ENCODE measurements at regions of chr16 and their contacts with region 1.

Region 1: GRCh38 chr16:4288148-4288921 is 15.5 kb upstream of the TFAP4 start:
- DNase-seq: peak; percentile 78
- ATAC-seq: peak; percentile 95
- H3K4me3 Mint-ChIP-seq: no peak overlapping the region
- H3K27ac Mint-ChIP-seq: no peak overlapping the region
- H3K4me1 Mint-ChIP-seq: peaks cover 9% of the 10 kb centered on the region
- H3K27me3 Mint-ChIP-seq: peaks cover 15% of the 10 kb centered on the region
- CTCF ChIP-seq: peak; percentile 79

Region 2: GRCh38 chr16:4220358-4220757 is 68.0 kb before region 1 on chr16:
- CTCF ChIA-PET with region 1: no interaction called
- POLR2A ChIA-PET with region 1: no interaction called
- intact Hi-C with region 1: no loop called
- DNase-seq: no peak
- ATAC-seq: no peak
- H3K4me3 Mint-ChIP-seq: no peak overlapping the region
- H3K27ac Mint-ChIP-seq: no peak overlapping the region
- H3K4me1 Mint-ChIP-seq: no peaks in the 10 kb centered on the region
- H3K27me3 Mint-ChIP-seq: peaks cover 10% of the 10 kb centered on the region
- CTCF ChIP-seq: no peak

Region 3: DNA sequence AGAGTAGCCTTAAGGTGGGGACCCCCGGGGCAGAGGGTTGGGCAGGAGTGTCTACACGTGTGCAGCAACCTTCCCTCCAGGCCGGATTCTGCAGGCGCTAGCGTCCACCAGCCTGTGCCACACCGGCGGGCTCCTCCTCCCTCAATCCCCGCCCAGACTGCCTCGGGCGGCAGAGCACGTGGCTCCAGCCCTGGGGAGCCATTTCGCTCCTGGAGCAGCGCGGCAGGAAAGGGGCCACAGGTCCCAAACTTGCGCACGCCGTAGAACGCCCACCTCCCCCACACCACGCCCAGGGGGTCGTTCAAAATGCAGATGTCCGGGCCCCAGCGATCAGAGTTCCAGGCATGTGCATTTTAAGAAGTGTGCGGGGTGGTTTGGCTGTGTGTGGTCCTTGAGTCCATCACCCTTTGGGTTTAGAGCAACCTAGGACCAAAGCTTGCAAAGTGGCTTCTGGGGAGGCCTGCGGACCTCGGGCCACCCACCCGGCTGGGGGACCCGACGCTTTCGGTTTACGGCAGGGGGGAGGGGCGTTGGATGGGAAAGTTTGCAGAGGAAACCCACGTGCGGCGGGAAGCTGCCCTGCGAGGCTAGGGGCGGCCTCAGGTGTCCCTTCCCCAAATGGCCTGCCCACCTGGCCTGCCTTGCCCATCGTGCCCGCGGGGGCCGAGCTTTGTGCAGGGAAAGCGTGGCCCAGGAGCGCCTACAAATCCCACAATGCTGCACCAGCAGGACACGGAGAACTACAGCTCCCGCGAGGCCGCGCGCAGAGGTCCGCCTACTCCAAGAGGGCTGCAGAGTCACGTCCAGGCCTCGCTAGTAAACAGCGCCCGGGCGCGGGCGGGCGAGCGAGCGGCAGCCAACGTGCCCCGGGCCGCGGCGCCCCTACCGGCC is 16.9 kb before region 1 on chr16:
- CTCF ChIA-PET with region 1: no interaction called
- POLR2A ChIA-PET with region 1: interaction called, 5 read pairs
- intact Hi-C with region 1: loop called (anchors 2 kb)
- DNase-seq: peak; percentile 82
- ATAC-seq: peak; percentile 81
- H3K4me3 Mint-ChIP-seq: peak overlapping the region; percentile 86
- H3K27ac Mint-ChIP-seq: peak overlapping the region; percentile 88
- H3K4me1 Mint-ChIP-seq: peaks cover 11% of the 10 kb centered on the region
- H3K27me3 Mint-ChIP-seq: no peaks in the 10 kb centered on the region
- CTCF ChIP-seq: no peak

Region 4: DNA sequence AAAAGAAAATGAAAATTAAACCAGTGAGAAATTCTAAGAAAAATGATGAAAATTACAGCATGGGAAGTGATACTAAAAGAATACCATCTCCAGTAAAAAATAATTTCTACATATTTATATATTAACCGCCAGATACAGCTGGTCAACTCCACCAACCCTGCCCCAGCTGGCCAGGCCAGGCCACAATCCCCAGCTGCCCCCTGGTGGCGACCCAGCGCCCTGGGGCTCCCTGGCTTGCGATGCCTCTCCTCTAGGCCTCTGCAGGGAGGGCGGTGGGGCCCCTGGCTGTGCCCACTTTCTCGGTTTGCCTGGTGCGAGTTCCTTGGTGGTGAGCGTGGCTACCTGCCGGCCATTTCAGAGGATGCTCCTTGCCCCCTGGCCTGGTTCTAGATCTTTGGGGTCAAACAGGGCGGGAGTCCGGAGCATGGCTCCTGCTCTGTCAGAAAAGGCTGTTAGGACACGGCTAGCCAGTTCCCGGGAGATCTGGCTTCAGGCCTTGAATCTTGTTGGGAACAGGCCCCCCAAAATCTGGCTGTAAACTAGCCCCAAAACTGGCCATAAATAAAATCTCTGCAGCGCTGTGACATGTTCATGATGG is 42.0 kb after region 1 on chr16:
- CTCF ChIA-PET with region 1: interaction called, 63 read pairs
- POLR2A ChIA-PET with region 1: no interaction called
- intact Hi-C with region 1: loop called (anchors 1 kb)
- DNase-seq: peak; percentile 73
- ATAC-seq: peak; percentile 80
- H3K4me3 Mint-ChIP-seq: no peak overlapping the region
- H3K27ac Mint-ChIP-seq: no peak overlapping the region
- H3K4me1 Mint-ChIP-seq: peaks cover 11% of the 10 kb centered on the region
- H3K27me3 Mint-ChIP-seq: no peaks in the 10 kb centered on the region
- CTCF ChIP-seq: peak; percentile 80

Region 5: GRCh38 chr16:4433914-4434787 is 145.8 kb after region 1 on chr16:
- CTCF ChIA-PET with region 1: no interaction called
- POLR2A ChIA-PET with region 1: interaction called, 13 read pairs
- intact Hi-C with region 1: no loop called
- DNase-seq: no peak
- ATAC-seq: no peak
- H3K4me3 Mint-ChIP-seq: no peak overlapping the region
- H3K27ac Mint-ChIP-seq: no peak overlapping the region
- H3K4me1 Mint-ChIP-seq: peaks cover 3% of the 10 kb centered on the region
- H3K27me3 Mint-ChIP-seq: no peaks in the 10 kb centered on the region
- CTCF ChIP-seq: no peak

Measured in activated B cell treated with CpG ODN at 0.5 μM for 24 hours (primary cell).